CD4-positive, alpha-beta T cell (primary cell): ENCODE measurements at regions of chr4 and their contacts with region 1.

Region 1: GRCh38 chr4:89316931-89317366 is 9.3 kb upstream of the GPRIN3 start:
- DNase-seq: peak in 5 of 14 experiments; percentile 27 to 83 (median 69)
- ATAC-seq: peak; percentile 85
- H3K4me3 ChIP-seq: no peak overlapping the region
- H3K4me3 Mint-ChIP-seq: peak overlapping the region; percentile 13
- H3K27ac ChIP-seq: peak overlapping the region; percentile 38 to 68
- H3K27ac Mint-ChIP-seq: peak overlapping the region; percentile 81
- H3K4me1 ChIP-seq: peaks cover 26% of the 10 kb centered on the region
- H3K4me1 Mint-ChIP-seq: peaks cover 38% of the 10 kb centered on the region
- H3K27me3 ChIP-seq: no peaks in the 10 kb centered on the region
- H3K27me3 Mint-ChIP-seq: no peaks in the 10 kb centered on the region
- CTCF ChIP-seq: no peak

Region 2: DNA sequence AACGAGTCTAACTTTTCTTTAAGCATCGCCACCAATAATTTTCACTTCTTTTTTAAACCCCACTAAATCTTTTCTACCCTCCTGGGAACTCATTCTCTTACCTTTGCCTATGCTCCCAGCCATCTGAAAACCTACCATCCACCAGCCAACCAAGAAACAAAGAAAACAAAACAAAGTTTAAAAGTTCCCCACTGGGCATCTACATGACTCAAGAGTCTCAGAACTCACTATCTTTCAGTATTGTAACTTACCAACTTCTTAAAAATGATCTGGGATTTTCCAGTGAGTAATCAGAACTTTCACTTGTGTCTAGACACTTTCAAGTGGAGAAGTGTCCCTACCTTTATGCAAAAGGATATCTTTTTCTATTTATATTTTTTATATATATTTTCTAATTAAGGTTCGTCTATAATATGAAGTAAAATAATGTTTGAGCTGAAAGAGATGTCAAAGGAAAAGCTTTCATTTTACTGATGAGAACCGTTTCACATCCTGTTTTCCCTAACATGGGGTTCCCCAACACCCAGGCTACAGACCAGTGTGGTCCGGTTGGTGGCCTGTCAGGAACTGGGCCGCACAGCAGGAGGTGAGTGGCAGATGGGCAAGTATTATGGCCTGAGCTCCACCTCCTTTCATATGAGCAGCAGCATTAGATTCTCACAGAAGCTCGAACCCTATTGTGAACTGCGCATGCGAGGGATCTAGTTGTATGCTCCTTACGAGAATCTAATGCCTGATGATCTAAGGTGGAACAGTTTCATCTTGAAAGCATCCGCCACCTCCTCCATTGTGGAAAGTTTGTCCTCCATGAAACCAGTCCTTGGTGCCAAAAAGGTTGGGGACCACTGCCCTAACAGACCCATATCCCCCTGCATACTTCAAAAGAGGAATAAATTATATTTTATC is 215.4 kb before region 1 on chr4:
- CTCF ChIA-PET with region 1: no interaction called
- POLR2A ChIA-PET with region 1: no interaction called
- intact Hi-C with region 1: no loop called
- DNase-seq: peak in 2 of 14 experiments; percentile 24 to 46
- ATAC-seq: no peak
- H3K4me3 ChIP-seq: no peak overlapping the region
- H3K4me3 Mint-ChIP-seq: no peak overlapping the region
- H3K27ac ChIP-seq: no peak overlapping the region
- H3K27ac Mint-ChIP-seq: no peak overlapping the region
- H3K4me1 ChIP-seq: no peaks in the 10 kb centered on the region
- H3K4me1 Mint-ChIP-seq: no peaks in the 10 kb centered on the region
- H3K27me3 ChIP-seq: peaks cover 0 to 2% of the 10 kb centered on the region in 2 experiments
- H3K27me3 Mint-ChIP-seq: peaks cover 10% of the 10 kb centered on the region
- CTCF ChIP-seq: no peak

Region 3: DNA sequence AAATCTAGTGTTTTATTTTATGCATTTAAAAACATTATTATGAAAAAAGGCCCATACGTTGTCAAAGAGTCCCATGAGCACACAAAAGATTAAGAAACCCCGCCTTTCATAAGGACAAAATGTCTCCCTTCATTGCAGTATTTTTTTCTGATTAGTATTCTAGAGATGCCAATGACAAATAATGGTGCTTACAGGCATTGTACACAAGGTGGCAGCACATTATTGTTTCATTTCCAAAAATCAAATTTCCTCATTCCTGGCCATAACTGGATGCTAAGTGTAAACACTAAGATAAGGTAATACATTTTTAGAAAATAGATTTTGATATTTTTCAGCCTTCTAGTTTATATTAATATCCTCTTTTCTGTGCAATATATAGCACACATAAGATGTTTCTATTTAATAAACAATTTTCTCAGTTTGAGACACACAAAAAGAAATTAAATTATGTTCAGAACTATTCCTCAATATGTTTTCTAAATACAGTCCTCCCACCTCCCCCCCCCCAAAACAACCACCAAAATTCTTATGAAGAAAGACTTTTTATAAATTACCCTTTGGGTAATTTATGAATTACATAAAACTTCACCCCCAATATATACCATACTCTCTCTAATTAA is 158.0 kb before region 1 on chr4:
- CTCF ChIA-PET with region 1: no interaction called
- POLR2A ChIA-PET with region 1: no interaction called
- intact Hi-C with region 1: no loop called
- DNase-seq: peak in 4 of 14 experiments; percentile 4 to 62 (median 46)
- ATAC-seq: peak; percentile 69
- H3K4me3 ChIP-seq: no peak overlapping the region
- H3K4me3 Mint-ChIP-seq: no peak overlapping the region
- H3K27ac ChIP-seq: no peak overlapping the region
- H3K27ac Mint-ChIP-seq: no peak overlapping the region
- H3K4me1 ChIP-seq: no peaks in the 10 kb centered on the region
- H3K4me1 Mint-ChIP-seq: no peaks in the 10 kb centered on the region
- H3K27me3 ChIP-seq: no peaks in the 10 kb centered on the region
- H3K27me3 Mint-ChIP-seq: peaks cover 3% of the 10 kb centered on the region
- CTCF ChIP-seq: peak; percentile 87

Region 4: DNA sequence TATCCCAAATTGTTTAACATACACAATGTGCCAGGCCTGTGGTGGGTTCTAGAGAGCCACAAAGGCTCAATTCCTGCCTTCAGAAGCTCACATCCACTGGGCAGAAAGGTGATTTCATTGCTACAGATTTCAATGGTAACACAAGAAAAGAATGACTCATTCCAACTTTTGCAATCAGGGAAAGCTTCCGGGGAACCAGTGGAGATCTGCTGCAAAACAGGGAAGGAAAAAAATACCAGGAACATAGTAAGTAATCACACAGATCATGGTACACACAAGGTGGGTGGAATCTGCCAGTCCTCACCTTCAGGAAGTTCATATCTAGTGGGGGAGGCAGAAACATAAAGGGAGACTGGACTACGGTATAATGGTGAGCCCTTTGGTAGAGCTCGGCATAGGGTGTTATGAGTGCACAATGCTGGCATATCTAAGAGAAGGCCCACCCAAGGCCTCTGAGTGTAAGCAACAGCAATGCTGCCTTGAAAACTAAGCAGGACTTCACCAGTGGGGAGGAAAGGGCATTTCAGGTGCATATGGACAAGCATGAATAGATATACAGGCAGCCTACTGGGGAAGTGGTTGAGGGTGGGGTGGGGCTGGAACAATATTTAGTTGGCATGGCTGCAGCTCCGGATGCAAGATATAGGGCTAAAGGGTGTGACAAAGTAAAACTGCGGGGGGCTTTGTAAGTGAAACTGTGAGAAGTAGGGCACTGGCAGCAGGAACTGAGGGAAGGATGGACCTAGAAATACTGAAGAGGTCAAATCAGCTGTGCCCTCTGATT is 33.5 kb before region 1 on chr4:
- CTCF ChIA-PET with region 1: no interaction called
- POLR2A ChIA-PET with region 1: interaction called, 7 read pairs
- intact Hi-C with region 1: loop called in 1 of 2 experiments (anchors 5 kb)
- DNase-seq: peak in 10 of 14 experiments; percentile 27 to 94 (median 43)
- ATAC-seq: peak; percentile 82
- H3K4me3 ChIP-seq: peak overlapping the region; percentile 31
- H3K4me3 Mint-ChIP-seq: peak overlapping the region; percentile 62
- H3K27ac ChIP-seq: peak overlapping the region; percentile 39 to 92
- H3K27ac Mint-ChIP-seq: peak overlapping the region; percentile 89
- H3K4me1 ChIP-seq: peaks cover 67% of the 10 kb centered on the region
- H3K4me1 Mint-ChIP-seq: peaks cover 75% of the 10 kb centered on the region
- H3K27me3 ChIP-seq: no peaks in the 10 kb centered on the region
- H3K27me3 Mint-ChIP-seq: no peaks in the 10 kb centered on the region
- CTCF ChIP-seq: no peak